Body of pancreas (tissue), 4 donors: ENCODE measurements at regions of chr9 and their contacts with region 1.

Region 1: GRCh38 chr9:130682490-130683121 is 11.0 kb upstream of the EXOSC2 start:
- DNase-seq: peak; percentile 86 to 89 (median 87)
- ATAC-seq: peak; percentile 80
- H3K4me3 ChIP-seq: no peak overlapping the region
- H3K27ac ChIP-seq: peak overlapping the region in 1 of 4 donors; percentile 12
- H3K4me1 ChIP-seq: peaks cover 15% of the 10 kb centered on the region
- H3K27me3 ChIP-seq: no peaks in the 10 kb centered on the region
- CTCF ChIP-seq: peak; percentile 65 to 89 (median 86)
- POLR2A ChIP-seq: peak in 1 of 3 donors; percentile 32

Region 2: DNA sequence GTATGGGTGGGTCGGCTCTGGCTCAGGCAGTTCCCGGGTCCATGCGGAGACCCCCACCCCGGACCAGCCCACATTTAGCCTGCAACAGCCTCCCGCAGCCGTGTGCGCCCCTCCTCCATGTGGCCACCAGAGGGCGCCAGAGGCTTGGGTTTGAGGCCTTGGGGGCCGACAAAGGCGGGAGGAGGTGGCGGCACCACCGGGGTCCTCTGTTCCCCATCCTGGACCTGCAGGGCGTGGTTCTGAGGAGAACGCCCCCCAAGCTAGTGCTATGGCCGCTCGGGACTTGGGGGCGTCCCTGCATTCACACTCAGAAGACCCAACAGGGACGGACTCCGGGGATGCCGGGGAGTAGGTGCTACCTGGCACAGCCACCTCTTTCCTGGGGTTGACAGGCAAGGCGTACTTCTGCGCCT is 221.4 kb before region 1 on chr9:
- intact Hi-C with region 1: loop called (anchors 5 kb)
- DNase-seq: peak; percentile 44 to 71 (median 69)
- ATAC-seq: peak; percentile 55
- H3K4me3 ChIP-seq: no peak overlapping the region
- H3K27ac ChIP-seq: no peak overlapping the region
- H3K4me1 ChIP-seq: peaks cover 4% of the 10 kb centered on the region
- H3K27me3 ChIP-seq: no peaks in the 10 kb centered on the region
- CTCF ChIP-seq: peak; percentile 79 to 92 (median 86)
- POLR2A ChIP-seq: no peak

Region 3: DNA sequence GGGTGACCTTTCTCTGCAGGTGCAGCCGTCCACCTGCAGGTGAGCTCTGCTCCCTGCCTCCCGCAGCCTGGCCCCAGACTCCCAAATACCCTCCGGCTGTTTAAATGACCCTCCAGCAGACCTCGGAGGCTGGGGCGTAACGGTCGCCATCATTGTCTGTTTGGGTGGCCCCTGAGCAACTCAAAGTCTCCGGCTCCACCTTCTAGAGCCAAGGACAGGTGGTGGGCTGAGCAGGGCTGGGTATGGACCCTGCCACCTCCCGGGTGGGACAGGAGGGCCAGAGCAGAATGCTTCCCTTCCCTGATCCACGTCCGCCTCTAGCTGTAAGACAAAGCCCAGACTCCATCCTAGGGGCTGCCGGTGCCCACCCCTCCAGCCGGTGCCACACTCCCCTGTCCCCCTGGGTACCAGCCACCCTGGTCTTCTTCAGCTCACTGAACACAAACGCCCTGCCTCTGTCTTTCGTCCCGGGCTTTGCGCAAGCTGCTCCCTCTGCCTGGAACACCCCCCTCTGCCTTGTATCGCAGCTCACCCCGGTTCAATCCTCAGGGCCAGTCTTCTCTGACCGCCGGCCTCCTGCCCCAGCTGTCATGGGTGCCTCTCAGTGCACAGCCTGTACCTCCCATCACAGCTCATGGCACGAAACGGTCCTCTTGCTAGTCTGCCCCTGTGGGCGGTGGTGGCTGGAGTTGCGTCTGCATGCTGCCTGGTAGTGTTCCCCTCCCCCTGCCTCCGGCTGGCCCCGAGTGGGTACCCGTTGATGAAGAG is 290.7 kb after region 1 on chr9:
- intact Hi-C with region 1: no loop called
- DNase-seq: no peak
- ATAC-seq: no peak
- H3K4me3 ChIP-seq: no peak overlapping the region
- H3K27ac ChIP-seq: no peak overlapping the region
- H3K4me1 ChIP-seq: no peaks in the 10 kb centered on the region
- H3K27me3 ChIP-seq: peaks cover 0 to 6% of the 10 kb centered on the region in 2 donors
- CTCF ChIP-seq: no peak
- POLR2A ChIP-seq: no peak

Region 4: GRCh38 chr9:131393622-131394463 is 711.2 kb after region 1 on chr9 and contains the start of gene PRRC2B:
- intact Hi-C with region 1: no loop called
- DNase-seq: peak; percentile 85 to 88 (median 87)
- ATAC-seq: peak; percentile 80
- H3K4me3 ChIP-seq: peak within 1 kb of the TSS in 1 of 2 donors; percentile 72
- H3K27ac ChIP-seq: peak within 1 kb of the TSS; percentile 90 to 98 (median 94)
- H3K4me1 ChIP-seq: peaks cover 57% of the 10 kb centered on the region
- H3K27me3 ChIP-seq: no peaks in the 10 kb centered on the region
- CTCF ChIP-seq: peak in 5 of 7 experiments; percentile 29 to 75 (median 69)
- POLR2A ChIP-seq: peak in 2 of 3 donors; percentile 18 to 46
- total RNA-seq, gene PRRC2B: 78.3 to 177 TPM